ENCODE measurements at regions of chr1 and their contacts with region 1.

Region 1: DNA sequence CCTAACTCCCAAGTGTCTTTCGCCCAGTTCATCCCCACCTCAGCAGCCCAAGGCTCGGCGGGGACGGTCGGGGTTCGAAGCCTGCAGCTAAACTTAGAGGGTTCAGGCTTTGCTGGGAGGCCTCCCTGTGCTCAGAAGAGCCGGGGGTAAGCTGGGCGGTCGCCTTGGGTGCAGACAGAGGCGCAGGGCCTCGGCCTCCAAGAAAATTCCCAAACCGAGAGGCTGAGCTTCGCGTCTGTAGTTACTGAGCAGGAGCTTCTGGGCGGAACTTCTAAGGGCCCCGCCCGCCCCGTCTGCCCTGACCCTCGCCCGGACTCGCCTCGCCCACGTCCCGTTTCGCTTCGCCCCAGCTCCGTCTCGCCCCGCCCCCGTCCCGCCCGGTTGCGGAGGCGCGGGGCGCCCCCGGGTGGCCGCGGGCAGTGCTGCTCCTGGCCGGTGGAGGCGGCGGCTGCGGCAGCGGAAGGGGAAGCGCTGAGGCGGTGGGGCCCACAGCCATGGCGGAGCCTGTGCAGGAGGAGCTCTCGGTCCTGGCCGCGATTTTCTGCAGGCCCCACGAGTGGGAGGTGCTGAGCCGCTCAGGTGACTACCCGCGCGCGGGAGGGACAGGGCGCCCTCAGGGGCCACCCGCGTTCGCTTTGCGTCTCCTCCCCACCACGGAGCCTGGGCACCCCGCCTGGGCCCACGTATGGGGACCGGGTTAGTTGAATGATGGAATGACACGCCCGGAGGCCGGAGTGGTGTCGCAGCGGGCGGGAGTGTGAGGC is at the start of gene RWDD3:
- DNase-seq: peak; percentile 89
- H3K4me3 ChIP-seq: peak within 1 kb of the TSS; percentile 99
- H3K27ac ChIP-seq: peak within 1 kb of the TSS; percentile 57
- H3K4me1 ChIP-seq: peaks cover 6% of the 10 kb centered on the region
- CTCF ChIP-seq: peak; percentile 75
- total RNA-seq, gene RWDD3: 10.9 and 11.7 TPM in 2 replicates

Region 2: DNA sequence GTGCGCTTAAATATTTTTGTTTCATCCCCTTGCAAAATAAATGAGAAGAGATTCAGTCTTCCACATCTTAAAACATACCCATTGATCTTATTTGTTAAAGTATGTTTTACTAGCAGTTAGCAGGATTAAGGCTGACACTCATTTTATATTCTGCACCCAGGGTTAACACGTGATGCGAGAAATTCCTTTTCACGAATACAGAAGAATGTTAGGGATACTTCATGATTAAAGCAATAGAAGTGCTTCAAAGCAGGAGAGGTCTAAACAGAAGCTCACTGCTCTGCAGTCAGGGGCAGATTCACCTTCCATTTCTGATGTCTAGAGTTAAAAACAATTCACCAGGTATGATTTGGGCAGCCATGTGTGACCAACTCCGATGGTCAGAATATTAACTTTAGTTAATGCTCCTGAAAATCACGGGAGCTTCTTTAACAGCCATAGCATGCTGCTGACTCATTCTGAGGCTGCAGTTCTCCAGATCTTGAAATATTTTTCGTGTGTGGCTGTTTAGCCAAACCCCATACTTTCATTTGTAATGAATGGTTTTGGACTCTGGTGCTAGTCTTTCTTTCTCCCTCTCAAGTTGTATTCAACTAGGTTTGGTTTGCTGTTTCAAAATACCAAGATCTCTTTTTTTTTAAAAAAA is 1572.0 kb before region 1 on chr1:
- CTCF ChIA-PET with region 1: no interaction called
- POLR2A ChIA-PET with region 1: no interaction called
- intact Hi-C with region 1: no loop called
- DNase-seq: no peak
- H3K4me3 ChIP-seq: no peak overlapping the region
- H3K27ac ChIP-seq: no peak overlapping the region
- H3K4me1 ChIP-seq: no peaks in the 10 kb centered on the region
- CTCF ChIP-seq: no peak

Region 3: GRCh38 chr1:94617134-94617805 is 616.6 kb before region 1 on chr1:
- CTCF ChIA-PET with region 1: no interaction called
- POLR2A ChIA-PET with region 1: interaction called, 10 read pairs
- intact Hi-C with region 1: no loop called
- DNase-seq: no peak
- H3K4me3 ChIP-seq: no peak overlapping the region
- H3K27ac ChIP-seq: no peak overlapping the region
- H3K4me1 ChIP-seq: no peaks in the 10 kb centered on the region
- CTCF ChIP-seq: no peak

Region 4: DNA sequence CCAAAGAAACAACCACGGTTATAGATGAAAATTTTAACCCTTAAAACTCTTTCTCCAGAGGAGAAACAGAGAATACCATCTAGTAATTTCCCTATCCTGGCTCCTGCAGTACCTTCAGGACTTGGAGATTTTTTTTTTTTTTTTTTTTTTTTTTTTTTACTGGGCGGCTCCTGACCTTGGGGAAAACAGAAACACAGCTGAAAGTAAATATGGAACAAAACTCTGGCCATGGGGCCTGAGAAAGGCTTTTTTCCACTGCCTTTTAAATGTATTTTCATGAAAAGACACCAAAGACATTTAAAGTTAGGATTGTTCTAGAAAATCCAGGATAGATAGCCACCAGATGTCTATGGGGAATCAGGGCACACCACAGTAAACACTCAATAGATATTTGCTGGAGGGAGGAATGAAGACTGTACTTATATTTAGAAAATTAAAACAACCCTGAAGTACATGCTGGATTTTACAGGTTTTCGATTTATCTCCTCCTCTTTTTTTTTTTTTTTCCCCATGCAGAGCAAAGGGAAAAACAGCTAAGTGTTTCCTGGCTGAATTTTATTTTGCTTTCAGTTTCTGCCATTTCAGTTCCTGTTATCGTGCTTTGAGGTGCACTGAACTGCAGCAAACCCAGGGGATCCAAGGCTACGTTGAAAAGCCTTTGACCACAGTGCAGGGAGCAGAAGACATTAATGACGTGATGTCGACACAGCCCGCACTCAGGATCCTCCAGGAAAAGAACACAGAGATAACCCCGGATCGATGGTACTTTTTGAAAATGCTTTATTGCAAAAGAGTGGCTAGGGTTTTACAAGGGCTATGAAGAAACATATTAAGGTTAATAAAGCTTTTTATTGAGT is 271.3 kb before region 1 on chr1:
- CTCF ChIA-PET with region 1: no interaction called
- POLR2A ChIA-PET with region 1: interaction called, 4 read pairs
- intact Hi-C with region 1: loop called (anchors 10 kb)
- DNase-seq: peak; percentile 86
- H3K4me3 ChIP-seq: peak overlapping the region; percentile 58
- H3K27ac ChIP-seq: peak overlapping the region; percentile 67
- H3K4me1 ChIP-seq: peaks cover 23% of the 10 kb centered on the region
- CTCF ChIP-seq: no peak

Region 5: GRCh38 chr1:95072532-95073419 is 161.1 kb before region 1 on chr1 and contains the start of gene ALG14:
- CTCF ChIA-PET with region 1: interaction called, 4 read pairs
- POLR2A ChIA-PET with region 1: interaction called, 9 read pairs
- intact Hi-C with region 1: loop called (anchors 2 kb)
- DNase-seq: peak; percentile 94
- H3K4me3 ChIP-seq: peak within 1 kb of the TSS; percentile 71
- H3K27ac ChIP-seq: peak within 1 kb of the TSS; percentile 38
- H3K4me1 ChIP-seq: peaks cover 14% of the 10 kb centered on the region
- CTCF ChIP-seq: no peak
- total RNA-seq, gene ALG14: 1.6 and 5.2 TPM in 2 replicates

Region 6: GRCh38 chr1:95084317-95085176 is 149.4 kb before region 1 on chr1:
- CTCF ChIA-PET with region 1: interaction called, 4 read pairs
- POLR2A ChIA-PET with region 1: no interaction called
- intact Hi-C with region 1: loop called (anchors 1 kb)
- DNase-seq: peak; percentile 59
- H3K4me3 ChIP-seq: no peak overlapping the region
- H3K27ac ChIP-seq: no peak overlapping the region
- H3K4me1 ChIP-seq: no peaks in the 10 kb centered on the region
- CTCF ChIP-seq: peak; percentile 87

Region 7: DNA sequence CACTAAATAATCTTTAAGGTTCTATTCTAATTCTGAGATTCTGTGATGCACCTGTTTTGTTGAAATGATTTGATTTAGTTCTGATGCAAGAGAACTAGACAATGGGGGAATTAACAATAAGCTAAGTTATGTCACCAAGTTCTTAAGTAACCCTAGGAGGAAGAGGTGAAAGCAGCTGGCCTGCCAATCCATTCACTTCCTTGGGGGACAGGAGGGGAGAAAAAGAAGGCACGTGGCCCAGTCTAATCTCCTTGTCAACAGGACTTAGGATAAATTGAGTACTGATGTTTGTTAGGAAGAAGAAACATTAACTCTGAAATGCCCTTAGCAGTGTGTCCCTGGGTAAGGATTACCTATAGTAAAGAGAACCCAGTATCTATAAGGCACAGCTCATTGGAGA is 79.8 kb before region 1 on chr1:
- CTCF ChIA-PET with region 1: no interaction called
- POLR2A ChIA-PET with region 1: no interaction called
- intact Hi-C with region 1: no loop called
- DNase-seq: no peak
- H3K4me3 ChIP-seq: no peak overlapping the region
- H3K27ac ChIP-seq: no peak overlapping the region
- H3K4me1 ChIP-seq: no peaks in the 10 kb centered on the region
- CTCF ChIP-seq: no peak

Region 8: DNA sequence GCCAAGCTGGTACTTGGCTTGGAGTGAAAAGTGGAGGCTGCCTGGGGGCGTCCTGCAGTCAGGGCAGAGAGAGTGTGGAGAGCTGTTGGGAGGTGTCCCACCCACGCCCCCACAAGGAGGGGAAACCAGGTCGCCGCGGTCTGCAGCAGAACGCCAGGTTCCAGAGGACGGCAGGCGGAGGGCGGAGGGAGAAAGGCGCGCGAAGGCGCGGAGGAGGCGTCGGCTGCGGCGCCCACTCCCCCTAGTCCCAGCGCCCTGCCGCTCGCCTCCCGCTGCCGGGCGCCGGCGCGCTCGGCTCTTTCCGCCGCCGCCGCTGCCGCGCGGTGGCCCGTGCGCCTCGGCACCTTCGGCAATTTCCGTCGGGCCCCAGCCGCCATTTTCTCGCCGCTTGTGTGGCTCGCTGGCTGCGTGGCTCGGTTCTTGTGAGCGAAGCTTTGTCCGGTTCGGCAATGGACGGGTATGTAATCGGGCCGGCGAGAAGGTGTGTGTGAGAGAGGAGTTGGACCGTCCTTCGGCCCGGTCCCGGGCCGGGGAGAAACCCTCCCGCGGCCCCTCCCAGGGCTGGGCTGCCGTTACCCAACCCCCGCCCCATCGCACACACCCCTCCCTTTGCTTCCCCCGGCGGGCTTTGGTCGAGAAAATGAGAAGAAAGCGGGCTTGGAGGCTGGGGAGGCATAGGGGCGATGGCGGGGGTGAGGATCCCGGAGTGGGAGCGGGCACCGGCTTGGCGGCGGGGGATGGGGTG is 1487.7 kb after region 1 on chr1 and contains the start of gene PTBP2:
- CTCF ChIA-PET with region 1: no interaction called
- POLR2A ChIA-PET with region 1: no interaction called
- intact Hi-C with region 1: loop called (anchors 10 kb)
- DNase-seq: peak; percentile 87
- H3K4me3 ChIP-seq: peak within 1 kb of the TSS; percentile 82
- H3K27ac ChIP-seq: peak within 1 kb of the TSS; percentile 63
- H3K4me1 ChIP-seq: peaks cover 19% of the 10 kb centered on the region
- CTCF ChIP-seq: no peak
- total RNA-seq, gene PTBP2: 36.1 and 36.9 TPM in 2 replicates

Measured in OCI-LY7 (cell line).